Prostate gland (tissue), 2 donors: ENCODE measurements at regions of chr1 and their contacts with region 1.

Region 1: DNA sequence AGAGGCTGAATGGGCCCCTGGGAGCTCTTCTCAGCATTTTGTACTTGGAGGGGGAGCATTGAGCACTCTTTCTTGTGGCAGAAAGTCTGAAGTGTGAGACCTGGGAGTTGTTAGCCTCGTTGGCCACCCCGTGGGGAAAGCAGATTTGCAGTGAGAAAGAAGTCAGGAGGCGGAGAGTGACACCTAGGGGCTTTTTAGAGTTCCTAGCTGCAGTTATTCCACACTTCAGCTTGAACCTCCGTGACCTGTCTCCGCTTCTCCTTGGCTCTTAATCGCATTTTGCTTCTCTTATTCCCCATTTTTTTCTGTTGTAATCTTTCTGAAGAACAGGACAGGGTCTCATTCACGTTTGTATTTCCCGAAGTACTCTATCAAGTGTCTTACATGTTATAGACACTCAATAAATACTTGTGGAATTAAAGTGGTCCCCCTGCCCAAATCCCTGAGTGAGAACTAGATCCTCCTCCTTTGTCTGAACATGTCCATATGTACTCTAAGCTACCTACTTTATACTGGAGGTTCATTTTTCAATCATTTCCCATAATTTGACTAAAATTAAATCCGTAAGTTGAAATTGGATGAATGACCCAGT is 14.5 kb upstream of the C1orf141 start:
- DNase-seq: peak; percentile 62
- H3K4me3 ChIP-seq: no peak overlapping the region
- H3K27ac ChIP-seq: no peak overlapping the region
- H3K4me1 ChIP-seq: peaks cover 3% of the 10 kb centered on the region
- H3K27me3 ChIP-seq: no peaks in the 10 kb centered on the region
- CTCF ChIP-seq: peak; percentile 36 to 78 (median 70)
- POLR2A ChIP-seq: no peak

Region 2: DNA sequence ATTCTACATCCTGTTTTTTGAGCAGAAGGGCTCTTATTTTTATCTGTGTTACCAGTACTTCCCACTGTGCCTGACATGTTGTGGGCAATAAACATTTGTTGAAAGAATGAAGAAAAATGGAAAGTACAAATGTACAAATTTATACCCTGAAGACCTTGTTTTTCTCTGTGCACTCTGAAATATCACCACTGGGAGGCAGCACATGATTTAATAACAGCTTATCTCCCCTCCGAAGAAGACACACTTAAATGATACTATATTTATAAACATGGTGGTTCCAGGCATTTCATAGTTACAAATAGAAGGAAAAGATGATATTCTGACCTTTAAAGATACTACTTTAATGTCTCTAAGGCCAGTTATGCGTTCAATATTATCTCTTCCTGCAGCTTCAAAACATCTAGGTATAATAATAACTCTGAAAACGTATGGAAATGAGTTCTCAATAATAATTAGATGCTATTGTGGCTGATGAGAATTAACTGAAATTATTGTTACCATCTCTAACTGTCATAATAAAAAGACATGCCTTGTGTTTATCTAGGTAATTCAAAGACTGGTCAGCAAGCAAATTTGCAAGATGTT is 384.2 kb before region 1 on chr1:
- intact Hi-C with region 1: loop called (anchors 2 kb)
- DNase-seq: peak; percentile 16
- H3K4me3 ChIP-seq: no peak overlapping the region
- H3K27ac ChIP-seq: no peak overlapping the region
- H3K4me1 ChIP-seq: no peaks in the 10 kb centered on the region
- H3K27me3 ChIP-seq: no peaks in the 10 kb centered on the region
- CTCF ChIP-seq: peak; percentile 18 to 77 (median 64)
- POLR2A ChIP-seq: no peak

Region 3: DNA sequence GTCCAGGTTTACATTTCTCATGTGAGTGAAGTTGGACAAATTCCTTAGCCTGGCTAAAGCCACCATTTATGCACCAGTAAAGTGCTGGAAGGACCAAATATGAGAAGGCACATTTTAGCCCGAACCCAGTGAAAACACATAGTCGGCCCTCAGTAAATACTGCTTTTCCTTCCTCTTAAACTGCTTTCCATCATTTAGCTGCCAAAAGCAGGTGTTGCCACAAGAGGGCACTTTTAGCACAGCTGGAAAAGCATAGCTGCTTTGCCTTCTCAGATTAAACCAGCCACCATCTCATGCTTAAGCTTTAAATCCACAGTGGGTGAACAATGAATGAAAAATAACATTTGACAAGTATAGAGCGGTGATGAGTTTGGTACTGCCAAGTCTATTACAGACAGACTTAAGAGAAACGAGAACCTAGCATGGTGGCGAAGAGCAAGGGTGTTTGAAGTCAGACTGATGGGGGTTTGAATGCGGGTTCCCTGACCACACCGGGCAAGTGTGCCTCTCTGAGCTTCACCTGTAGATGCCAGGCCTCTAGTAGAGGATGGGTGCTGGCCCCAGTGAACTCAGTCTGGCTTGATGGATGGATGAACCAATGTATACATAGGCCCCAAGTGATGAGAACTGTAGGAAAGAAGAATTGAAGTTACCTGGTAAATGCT is 153.1 kb before region 1 on chr1:
- intact Hi-C with region 1: loop called (anchors 5 kb)
- DNase-seq: peak; percentile 53
- H3K4me3 ChIP-seq: no peak overlapping the region
- H3K27ac ChIP-seq: no peak overlapping the region
- H3K4me1 ChIP-seq: no peaks in the 10 kb centered on the region
- H3K27me3 ChIP-seq: no peaks in the 10 kb centered on the region
- CTCF ChIP-seq: peak; percentile 32 to 74 (median 67)
- POLR2A ChIP-seq: no peak

Region 4: DNA sequence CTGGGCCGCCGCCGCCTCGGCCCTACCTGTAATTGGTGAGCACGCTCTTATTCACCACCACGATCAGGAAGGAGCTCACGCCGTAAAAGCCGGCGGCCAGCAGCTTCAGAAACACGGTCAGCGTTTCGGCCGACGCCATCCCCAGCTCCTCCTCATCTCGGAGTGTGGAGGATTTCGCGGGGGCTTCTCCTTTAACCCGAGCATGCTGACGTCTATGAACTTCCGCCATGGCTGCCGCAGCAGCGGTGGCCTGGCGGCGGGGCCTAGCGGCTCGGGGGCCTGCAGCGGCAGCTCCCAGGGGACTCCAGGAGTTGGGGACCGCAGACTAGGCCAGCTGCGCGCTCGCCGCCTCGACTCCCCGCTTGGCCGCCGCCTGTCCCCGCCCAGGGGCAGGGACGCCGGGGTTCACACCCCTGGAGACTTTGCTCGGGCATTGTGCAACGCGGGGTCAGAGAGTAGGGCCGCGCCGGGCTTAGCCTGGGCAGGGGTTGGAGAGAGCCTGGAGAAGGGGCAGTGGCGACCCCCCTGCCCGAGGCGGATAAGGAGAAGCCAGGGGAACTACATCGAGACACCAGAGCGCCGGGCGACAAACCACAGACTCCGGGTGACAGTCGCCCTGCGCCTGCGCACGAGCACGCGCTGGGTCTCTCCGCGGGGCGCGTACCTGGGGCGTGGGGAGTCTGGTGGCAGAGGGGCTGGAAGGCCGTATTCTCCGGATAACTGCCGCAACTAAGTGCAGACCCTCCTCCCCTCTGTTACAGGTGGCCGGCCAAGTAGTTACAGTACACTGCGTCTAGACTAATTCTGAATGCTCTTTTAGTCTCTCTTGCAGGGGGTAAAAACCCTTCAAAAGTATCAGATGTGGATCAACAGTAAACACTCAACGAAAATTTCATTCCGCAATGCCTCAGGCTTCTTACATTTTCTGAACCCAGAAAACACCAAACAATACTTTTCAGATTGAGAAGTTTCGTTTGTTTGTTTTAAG is 95.2 kb before region 1 on chr1 and contains the start of gene SLC35D1:
- intact Hi-C with region 1: loop called (anchors 10 kb)
- DNase-seq: peak; percentile 64
- H3K4me3 ChIP-seq: peak within 1 kb of the TSS; percentile 57 to 89
- H3K27ac ChIP-seq: peak within 1 kb of the TSS; percentile 91 to 95
- H3K4me1 ChIP-seq: no peaks in the 10 kb centered on the region
- H3K27me3 ChIP-seq: no peaks in the 10 kb centered on the region
- CTCF ChIP-seq: no peak
- POLR2A ChIP-seq: no peak
- total RNA-seq, gene SLC35D1: 13.0 to 13.2 TPM

Region 5: DNA sequence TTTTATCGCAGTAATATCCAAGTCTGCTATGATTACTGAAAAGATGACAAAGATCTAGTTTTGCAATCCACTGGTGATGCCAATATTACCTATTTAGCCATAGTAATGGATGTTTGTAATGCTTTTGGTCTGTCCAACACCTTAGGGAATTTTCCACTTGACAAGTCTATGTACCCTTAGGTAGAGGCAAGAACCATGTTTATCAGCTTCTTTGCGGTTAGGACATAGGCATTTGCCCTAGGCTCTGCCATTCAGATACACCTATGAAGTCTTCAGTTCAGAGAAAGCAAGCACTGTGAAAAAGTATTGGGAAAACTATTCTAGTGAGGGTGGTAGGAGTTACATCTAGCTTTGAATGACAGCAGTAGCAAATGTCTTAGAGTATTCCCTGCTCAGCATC is 55.1 kb before region 1 on chr1:
- intact Hi-C with region 1: no loop called
- DNase-seq: no peak
- H3K4me3 ChIP-seq: no peak overlapping the region
- H3K27ac ChIP-seq: no peak overlapping the region
- H3K4me1 ChIP-seq: no peaks in the 10 kb centered on the region
- H3K27me3 ChIP-seq: no peaks in the 10 kb centered on the region
- CTCF ChIP-seq: no peak
- POLR2A ChIP-seq: no peak

Region 6: GRCh38 chr1:67239738-67240137 is 90.5 kb after region 1 on chr1:
- intact Hi-C with region 1: no loop called
- DNase-seq: no peak
- H3K4me3 ChIP-seq: no peak overlapping the region
- H3K27ac ChIP-seq: no peak overlapping the region
- H3K4me1 ChIP-seq: no peaks in the 10 kb centered on the region
- H3K27me3 ChIP-seq: no peaks in the 10 kb centered on the region
- CTCF ChIP-seq: no peak
- POLR2A ChIP-seq: no peak

Region 7: DNA sequence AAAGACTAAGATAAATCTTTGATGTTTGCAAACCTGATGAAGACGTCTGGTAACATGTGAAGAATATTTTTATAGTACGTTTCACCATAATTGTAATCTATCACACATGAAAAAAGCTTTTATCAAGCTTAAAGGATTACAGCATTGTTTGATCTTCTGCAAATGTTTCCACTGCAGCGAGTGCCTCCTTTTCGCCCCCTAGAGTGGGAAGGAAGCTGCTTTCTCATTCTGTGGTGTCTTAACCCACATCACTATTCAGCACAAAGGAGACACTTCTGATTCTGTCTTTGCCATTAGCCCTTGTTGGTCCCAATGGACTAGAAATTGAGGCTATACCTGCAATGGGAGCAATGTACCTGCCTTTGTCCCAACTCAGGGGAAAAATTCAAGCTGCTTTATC is 112.4 kb after region 1 on chr1:
- intact Hi-C with region 1: no loop called
- DNase-seq: no peak
- H3K4me3 ChIP-seq: no peak overlapping the region
- H3K27ac ChIP-seq: no peak overlapping the region
- H3K4me1 ChIP-seq: no peaks in the 10 kb centered on the region
- H3K27me3 ChIP-seq: no peaks in the 10 kb centered on the region
- CTCF ChIP-seq: no peak
- POLR2A ChIP-seq: no peak